CD4-positive, alpha-beta memory T cell (primary cell): ENCODE measurements at regions of chr2 and their contacts with region 1.

Region 1: GRCh38 chr2:24409700-24410556 is 49.6 kb upstream of the ITSN2 start:
- DNase-seq: peak in 4 of 5 donors; percentile 49 to 53 (median 52)
- H3K4me3 ChIP-seq: no peak overlapping the region
- H3K4me3 Mint-ChIP-seq: no peak overlapping the region
- H3K27ac ChIP-seq: no peak overlapping the region
- H3K27ac Mint-ChIP-seq: no peak overlapping the region
- H3K4me1 ChIP-seq: no peaks in the 10 kb centered on the region
- H3K4me1 Mint-ChIP-seq: no peaks in the 10 kb centered on the region
- H3K27me3 ChIP-seq: no peaks in the 10 kb centered on the region
- H3K27me3 Mint-ChIP-seq: peaks cover 7 to 13% of the 10 kb centered on the region in 2 donors

Region 2: DNA sequence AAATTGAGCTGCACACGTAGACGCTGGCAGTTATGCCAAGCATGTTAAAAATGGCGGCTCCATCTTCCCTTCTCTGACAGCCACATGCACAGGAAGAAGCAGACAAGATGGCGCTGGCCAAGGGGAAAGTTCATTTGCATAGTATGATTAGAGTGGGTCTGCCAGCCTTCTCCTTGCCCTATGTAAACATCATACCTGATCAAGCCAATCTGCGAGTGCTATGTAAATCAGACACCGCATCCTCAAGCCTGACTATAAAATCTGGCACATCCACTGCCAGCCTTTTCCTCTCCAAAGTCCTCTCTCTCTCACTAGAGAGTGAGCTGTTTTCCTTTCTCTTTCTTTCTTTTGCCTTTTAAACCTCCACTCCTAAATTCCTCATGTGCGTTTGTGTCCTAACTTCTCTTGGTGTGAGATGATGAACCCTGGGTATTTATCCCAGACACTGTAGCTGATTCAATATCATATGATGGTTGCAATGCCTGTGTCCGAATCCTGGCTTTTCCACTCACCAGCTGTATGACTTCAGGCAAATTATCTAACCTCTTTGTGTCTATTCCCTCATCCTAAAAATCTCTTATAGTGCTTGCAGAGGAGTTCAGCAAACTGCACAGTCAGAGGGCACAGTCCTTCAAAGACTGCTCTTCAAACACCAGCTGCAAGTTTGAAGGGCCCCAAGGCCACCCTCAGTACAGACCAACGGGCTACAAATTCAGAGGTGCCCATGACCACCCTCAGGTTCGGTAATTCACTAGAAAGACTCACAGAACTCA is 10.3 kb before region 1 on chr2:
- CTCF ChIA-PET with region 1: interaction called, 15 read pairs
- POLR2A ChIA-PET with region 1: no interaction called
- intact Hi-C with region 1: no loop called
- DNase-seq: no peak
- H3K4me3 ChIP-seq: no peak overlapping the region
- H3K4me3 Mint-ChIP-seq: no peak overlapping the region
- H3K27ac ChIP-seq: no peak overlapping the region
- H3K27ac Mint-ChIP-seq: no peak overlapping the region
- H3K4me1 ChIP-seq: no peaks in the 10 kb centered on the region
- H3K4me1 Mint-ChIP-seq: peaks cover 0 to 9% (median 2%) of the 10 kb centered on the region in 4 donors
- H3K27me3 ChIP-seq: no peaks in the 10 kb centered on the region
- H3K27me3 Mint-ChIP-seq: peaks cover 4 to 10% of the 10 kb centered on the region in 2 donors

Region 3: GRCh38 chr2:24421668-24422067 is 11.7 kb after region 1 on chr2:
- CTCF ChIA-PET with region 1: interaction called, 32 read pairs
- POLR2A ChIA-PET with region 1: no interaction called
- intact Hi-C with region 1: no loop called
- DNase-seq: peak in 4 of 5 donors; percentile 29 to 34 (median 32)
- H3K4me3 ChIP-seq: no peak overlapping the region
- H3K4me3 Mint-ChIP-seq: no peak overlapping the region
- H3K27ac ChIP-seq: no peak overlapping the region
- H3K27ac Mint-ChIP-seq: peak overlapping the region in 1 of 7 donors; percentile 78
- H3K4me1 ChIP-seq: no peaks in the 10 kb centered on the region
- H3K4me1 Mint-ChIP-seq: peaks cover 0 to 3% (median 0%) of the 10 kb centered on the region in 4 donors
- H3K27me3 ChIP-seq: no peaks in the 10 kb centered on the region
- H3K27me3 Mint-ChIP-seq: no peaks in the 10 kb centered on the region

Region 4: DNA sequence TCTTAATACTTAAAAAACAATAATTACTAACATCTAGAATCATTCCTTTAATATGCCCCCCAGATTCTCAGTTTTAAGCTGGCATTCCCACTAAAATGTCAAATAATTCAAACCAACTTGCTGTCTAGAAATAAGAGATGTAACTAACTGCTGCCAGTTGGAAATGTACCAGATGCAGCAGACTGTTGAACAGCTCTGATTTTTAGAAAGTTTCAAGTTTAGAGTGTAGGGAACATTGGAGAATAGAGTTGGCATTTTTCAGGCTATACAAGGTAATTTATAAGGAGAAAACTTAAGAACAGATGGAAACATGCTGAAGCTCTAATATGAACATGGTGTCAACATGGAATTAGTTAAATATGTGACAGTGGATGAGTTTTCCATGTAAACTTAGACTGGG is 281.9 kb after region 1 on chr2:
- CTCF ChIA-PET with region 1: interaction called, 4 read pairs
- POLR2A ChIA-PET with region 1: no interaction called
- intact Hi-C with region 1: loop called (anchors 2 kb)
- DNase-seq: no peak
- H3K4me3 ChIP-seq: no peak overlapping the region
- H3K4me3 Mint-ChIP-seq: no peak overlapping the region
- H3K27ac ChIP-seq: no peak overlapping the region
- H3K27ac Mint-ChIP-seq: peak overlapping the region in 1 of 7 donors; percentile 8
- H3K4me1 ChIP-seq: no peaks in the 10 kb centered on the region
- H3K4me1 Mint-ChIP-seq: peaks cover 0 to 2% (median 0%) of the 10 kb centered on the region in 4 donors
- H3K27me3 ChIP-seq: no peaks in the 10 kb centered on the region
- H3K27me3 Mint-ChIP-seq: no peaks in the 10 kb centered on the region

Region 5: DNA sequence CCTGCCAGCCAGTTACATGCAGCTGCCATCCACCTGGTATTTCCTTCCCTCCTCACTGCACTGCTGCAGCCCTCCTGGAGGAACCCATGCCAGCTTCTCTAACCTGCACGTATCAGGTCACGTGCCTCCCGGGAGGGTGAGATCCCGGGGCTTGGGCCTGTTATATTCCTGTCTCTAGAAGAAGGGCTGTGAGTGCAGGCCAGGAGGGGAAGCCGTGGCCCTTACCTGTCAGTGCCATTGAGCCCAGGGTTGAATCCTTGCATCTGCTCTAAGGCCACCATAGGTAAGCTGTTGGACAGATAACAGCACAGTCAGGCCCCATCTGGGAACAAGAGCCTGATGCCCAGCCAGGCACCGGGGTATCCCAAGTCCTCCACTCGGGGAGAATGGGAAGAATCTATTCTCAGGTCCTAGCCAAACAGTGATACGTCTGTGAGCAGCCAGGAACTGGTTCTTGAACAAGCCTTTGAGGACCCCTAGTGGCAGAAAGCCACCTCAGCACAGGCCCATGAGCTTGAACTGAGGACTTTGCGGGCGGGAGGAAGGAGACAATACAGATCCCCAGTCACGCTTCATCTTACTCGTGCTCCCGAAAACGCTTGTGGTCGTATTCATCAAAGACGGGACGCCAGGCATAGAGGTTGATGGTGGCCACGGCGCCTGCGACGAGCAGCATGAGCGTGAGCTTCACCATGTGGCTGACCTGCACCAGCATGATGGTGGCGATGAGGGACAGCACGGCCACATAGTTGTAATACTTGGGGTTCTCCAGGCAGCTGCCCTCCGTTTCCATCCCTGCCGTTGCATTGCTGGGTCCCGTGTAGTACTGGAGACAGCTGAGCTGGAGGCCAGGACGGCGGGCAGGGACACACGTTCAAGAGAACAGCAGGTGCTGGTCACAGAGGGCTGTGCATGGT is 417.7 kb after region 1 on chr2:
- CTCF ChIA-PET with region 1: interaction called, 222 read pairs
- POLR2A ChIA-PET with region 1: interaction called, 6 read pairs
- intact Hi-C with region 1: loop called (anchors 1 kb)
- DNase-seq: peak; percentile 65 to 74 (median 70)
- H3K4me3 ChIP-seq: no peak overlapping the region
- H3K4me3 Mint-ChIP-seq: no peak overlapping the region
- H3K27ac ChIP-seq: no peak overlapping the region
- H3K27ac Mint-ChIP-seq: peak overlapping the region in 5 of 7 donors; percentile 3 to 75 (median 43)
- H3K4me1 ChIP-seq: peaks cover 20% of the 10 kb centered on the region
- H3K4me1 Mint-ChIP-seq: peaks cover 10 to 22% (median 19%) of the 10 kb centered on the region in 4 donors
- H3K27me3 ChIP-seq: no peaks in the 10 kb centered on the region
- H3K27me3 Mint-ChIP-seq: no peaks in the 10 kb centered on the region

Region 6: GRCh38 chr2:25131567-25132298 is 721.8 kb after region 1 on chr2:
- CTCF ChIA-PET with region 1: interaction called, 28 read pairs
- POLR2A ChIA-PET with region 1: no interaction called
- intact Hi-C with region 1: no loop called
- DNase-seq: no peak
- H3K4me3 ChIP-seq: no peak overlapping the region
- H3K4me3 Mint-ChIP-seq: peak overlapping the region; percentile 12 to 81 (median 66)
- H3K27ac ChIP-seq: no peak overlapping the region
- H3K27ac Mint-ChIP-seq: peak overlapping the region in 1 of 7 donors; percentile 38
- H3K4me1 ChIP-seq: no peaks in the 10 kb centered on the region
- H3K4me1 Mint-ChIP-seq: peaks cover 3 to 16% (median 9%) of the 10 kb centered on the region in 4 donors
- H3K27me3 ChIP-seq: peaks cover 37% of the 10 kb centered on the region
- H3K27me3 Mint-ChIP-seq: peaks cover 29 to 44% of the 10 kb centered on the region in 2 donors

Region 7: DNA sequence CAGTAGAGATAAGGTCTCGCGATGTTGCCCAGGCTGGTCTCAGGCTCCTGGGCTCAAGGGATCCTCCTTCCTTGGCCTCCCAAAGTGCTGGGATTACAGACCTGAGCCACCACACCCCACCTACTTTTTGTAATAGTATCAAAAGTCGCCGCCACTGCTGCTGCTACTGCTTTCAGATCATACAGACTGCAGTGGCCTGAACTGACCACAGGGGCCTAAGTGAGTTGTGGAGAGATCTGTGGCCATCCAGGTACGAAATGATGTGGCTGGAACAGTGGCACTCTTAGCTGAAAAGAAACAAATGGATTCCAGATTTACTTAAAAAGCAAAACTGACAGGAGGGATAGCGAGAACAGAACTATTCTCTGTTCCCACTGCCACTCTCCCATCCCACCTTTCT is 791.3 kb after region 1 on chr2:
- CTCF ChIA-PET with region 1: interaction called, 13 read pairs
- POLR2A ChIA-PET with region 1: interaction called, 3 read pairs
- intact Hi-C with region 1: loop called (anchors 1 kb)
- DNase-seq: no peak
- H3K4me3 ChIP-seq: no peak overlapping the region
- H3K4me3 Mint-ChIP-seq: no peak overlapping the region
- H3K27ac ChIP-seq: no peak overlapping the region
- H3K27ac Mint-ChIP-seq: peak overlapping the region in 1 of 7 donors; percentile 37
- H3K4me1 ChIP-seq: peaks cover 9% of the 10 kb centered on the region
- H3K4me1 Mint-ChIP-seq: peaks cover 2 to 19% (median 8%) of the 10 kb centered on the region in 4 donors
- H3K27me3 ChIP-seq: no peaks in the 10 kb centered on the region
- H3K27me3 Mint-ChIP-seq: peaks cover 0 to 3% of the 10 kb centered on the region in 2 donors